K562 (cell line): ENCODE measurements at regions of chr9 and their contacts with region 1.

Region 1: GRCh38 chr9:40914772-40915667 is 213.5 kb downstream of the FOXD4L6 start:
- DNase-seq: no peak
- ATAC-seq: no peak
- H3K4me3 ChIP-seq: no peak overlapping the region
- H3K27ac ChIP-seq: no peak overlapping the region
- H3K4me1 ChIP-seq: no peaks in the 10 kb centered on the region
- H3K27me3 ChIP-seq: no peaks in the 10 kb centered on the region
- CTCF ChIP-seq: no peak
- EP300 ChIP-seq: no peak
- POLR2A ChIP-seq: no peak
- RAD21 ChIP-seq: no peak

Region 2: GRCh38 chr9:40884072-40884901 is 30.7 kb before region 1 on chr9:
- CTCF ChIA-PET with region 1: no interaction called
- POLR2A ChIA-PET with region 1: no interaction called
- in situ Hi-C with region 1: no loop called
- intact Hi-C with region 1: loop called (anchors 5 kb)
- DNase-seq: peak in 2 of 4 experiments; percentile 2
- ATAC-seq: no peak
- H3K4me3 ChIP-seq: no peak overlapping the region
- H3K27ac ChIP-seq: no peak overlapping the region
- H3K4me1 ChIP-seq: peaks cover 0 to 10% of the 10 kb centered on the region in 2 experiments; a peak in 1 of 5 replicates
- H3K27me3 ChIP-seq: no peaks in the 10 kb centered on the region
- CTCF ChIP-seq: no peak
- EP300 ChIP-seq: no peak
- POLR2A ChIP-seq: no peak
- RAD21 ChIP-seq: no peak